CD4-positive, alpha-beta T cell (primary cell): ENCODE measurements at regions of chr19 and their contacts with region 1.

Region 1: GRCh38 chr19:19531951-19532805 is 3.5 kb downstream of the YJEFN3 start:
- DNase-seq: peak; percentile 69 to 94 (median 86)
- ATAC-seq: peak; percentile 84
- H3K4me3 ChIP-seq: no peak overlapping the region
- H3K4me3 Mint-ChIP-seq: peak overlapping the region; percentile 43
- H3K27ac ChIP-seq: no peak overlapping the region
- H3K27ac Mint-ChIP-seq: peak overlapping the region; percentile 47
- H3K4me1 ChIP-seq: peaks cover 11% of the 10 kb centered on the region
- H3K4me1 Mint-ChIP-seq: peaks cover 22% of the 10 kb centered on the region
- H3K27me3 ChIP-seq: no peaks in the 10 kb centered on the region
- H3K27me3 Mint-ChIP-seq: no peaks in the 10 kb centered on the region
- CTCF ChIP-seq: peak; percentile 88

Region 2: DNA sequence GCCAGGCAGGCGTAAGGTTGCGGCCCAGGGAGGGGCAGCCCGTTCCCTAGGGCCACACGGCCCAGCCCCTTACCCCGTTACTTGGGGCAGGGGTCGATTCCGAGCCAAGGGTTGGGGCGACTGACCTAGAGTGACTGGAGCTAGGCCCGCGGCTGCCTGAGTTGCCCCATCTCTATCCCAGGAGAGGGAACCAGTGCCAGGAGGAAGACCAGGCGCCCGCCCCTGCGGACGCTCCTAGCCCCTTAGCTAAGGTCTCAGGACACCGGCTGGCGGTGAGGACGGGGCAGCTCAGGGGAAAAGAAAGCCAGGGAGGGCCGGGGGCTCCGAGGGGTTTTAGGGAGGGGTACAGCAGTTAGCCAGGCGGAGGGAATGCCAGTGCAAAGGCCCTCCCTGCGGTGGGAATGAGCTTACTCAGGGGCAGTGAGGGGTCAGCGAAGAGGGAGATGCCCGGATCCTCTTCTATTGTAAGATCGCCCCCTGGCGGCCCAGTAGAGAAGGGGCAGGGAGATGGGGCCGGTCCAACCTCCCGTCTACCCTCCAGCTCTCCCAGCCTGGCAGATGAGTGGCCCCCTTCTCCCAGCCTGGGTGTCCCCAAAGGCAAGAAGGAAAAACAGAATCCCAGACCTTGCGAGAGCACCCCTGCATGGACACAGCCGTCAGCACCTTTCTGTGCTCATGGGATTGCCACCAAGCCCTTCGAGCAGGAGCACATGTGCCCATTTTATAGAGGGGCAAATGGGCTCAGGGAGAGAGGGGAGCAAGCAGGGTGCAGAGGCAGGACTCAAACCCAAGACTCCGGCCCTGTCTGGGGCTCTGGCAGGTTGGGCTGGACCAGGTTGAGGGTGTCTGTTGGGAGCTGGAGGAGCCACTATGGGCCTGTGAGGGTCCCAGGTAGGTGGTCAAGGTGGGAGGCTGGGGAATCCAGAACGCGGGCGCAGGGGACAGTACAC is 22.2 kb after region 1 on chr19:
- CTCF ChIA-PET with region 1: interaction called, 15 read pairs
- POLR2A ChIA-PET with region 1: interaction called, 10 read pairs
- intact Hi-C with region 1: no loop called
- DNase-seq: peak in 13 of 14 experiments; percentile 38 to 76 (median 49)
- ATAC-seq: peak; percentile 42
- H3K4me3 ChIP-seq: no peak overlapping the region
- H3K4me3 Mint-ChIP-seq: no peak overlapping the region
- H3K27ac ChIP-seq: no peak overlapping the region
- H3K27ac Mint-ChIP-seq: no peak overlapping the region
- H3K4me1 ChIP-seq: peaks cover 8% of the 10 kb centered on the region
- H3K4me1 Mint-ChIP-seq: peaks cover 13% of the 10 kb centered on the region
- H3K27me3 ChIP-seq: no peaks in the 10 kb centered on the region
- H3K27me3 Mint-ChIP-seq: no peaks in the 10 kb centered on the region
- CTCF ChIP-seq: peak; percentile 81

Region 3: GRCh38 chr19:19591133-19591825 is 59.1 kb after region 1 on chr19:
- CTCF ChIA-PET with region 1: interaction called, 12 read pairs
- POLR2A ChIA-PET with region 1: no interaction called
- intact Hi-C with region 1: loop called in 1 of 2 experiments (anchors 5 kb)
- DNase-seq: peak in 13 of 14 experiments; percentile 27 to 92 (median 49)
- ATAC-seq: peak; percentile 91
- H3K4me3 ChIP-seq: no peak overlapping the region
- H3K4me3 Mint-ChIP-seq: peak overlapping the region; percentile 60
- H3K27ac ChIP-seq: peak overlapping the region; percentile 55 to 79
- H3K27ac Mint-ChIP-seq: peak overlapping the region; percentile 92
- H3K4me1 ChIP-seq: peaks cover 78% of the 10 kb centered on the region
- H3K4me1 Mint-ChIP-seq: peaks cover 47% of the 10 kb centered on the region
- H3K27me3 ChIP-seq: no peaks in the 10 kb centered on the region
- H3K27me3 Mint-ChIP-seq: no peaks in the 10 kb centered on the region
- CTCF ChIP-seq: no peak

Region 4: GRCh38 chr19:19627621-19628500 is 95.7 kb after region 1 on chr19 and contains the start of gene LPAR2:
- CTCF ChIA-PET with region 1: interaction called, 10 read pairs
- POLR2A ChIA-PET with region 1: interaction called, 7 read pairs
- intact Hi-C with region 1: loop called in 1 of 2 experiments (anchors 5 kb)
- DNase-seq: peak; percentile 65 to 91 (median 80)
- ATAC-seq: peak; percentile 83
- H3K4me3 ChIP-seq: peak within 1 kb of the TSS; percentile 84
- H3K4me3 Mint-ChIP-seq: peak within 1 kb of the TSS; percentile 99
- H3K27ac ChIP-seq: peak within 1 kb of the TSS; percentile 52 to 84
- H3K27ac Mint-ChIP-seq: peak within 1 kb of the TSS; percentile 91
- H3K4me1 ChIP-seq: peaks cover 37% of the 10 kb centered on the region
- H3K4me1 Mint-ChIP-seq: peaks cover 28% of the 10 kb centered on the region
- H3K27me3 ChIP-seq: no peaks in the 10 kb centered on the region
- H3K27me3 Mint-ChIP-seq: no peaks in the 10 kb centered on the region
- CTCF ChIP-seq: no peak
- total RNA-seq, gene LPAR2: 85.9 to 93.7 TPM

Region 5: GRCh38 chr19:19745496-19746285 is 213.5 kb after region 1 on chr19:
- CTCF ChIA-PET with region 1: no interaction called
- POLR2A ChIA-PET with region 1: no interaction called
- intact Hi-C with region 1: loop called in 1 of 2 experiments (anchors 5 kb)
- DNase-seq: peak in 2 of 14 experiments; percentile 20 to 32
- ATAC-seq: peak; percentile 65
- H3K4me3 ChIP-seq: no peak overlapping the region
- H3K4me3 Mint-ChIP-seq: no peak overlapping the region
- H3K27ac ChIP-seq: no peak overlapping the region
- H3K27ac Mint-ChIP-seq: no peak overlapping the region
- H3K4me1 ChIP-seq: no peaks in the 10 kb centered on the region
- H3K4me1 Mint-ChIP-seq: no peaks in the 10 kb centered on the region
- H3K27me3 ChIP-seq: no peaks in the 10 kb centered on the region
- H3K27me3 Mint-ChIP-seq: no peaks in the 10 kb centered on the region
- CTCF ChIP-seq: no peak

Region 6: GRCh38 chr19:19956434-19957075 is 424.4 kb after region 1 on chr19:
- CTCF ChIA-PET with region 1: interaction called, 11 read pairs
- POLR2A ChIA-PET with region 1: interaction called, 5 read pairs
- intact Hi-C with region 1: loop called (anchors 1 kb)
- DNase-seq: no peak
- ATAC-seq: no peak
- H3K4me3 ChIP-seq: no peak overlapping the region
- H3K4me3 Mint-ChIP-seq: no peak overlapping the region
- H3K27ac ChIP-seq: no peak overlapping the region
- H3K27ac Mint-ChIP-seq: no peak overlapping the region
- H3K4me1 ChIP-seq: peaks cover 6% of the 10 kb centered on the region
- H3K4me1 Mint-ChIP-seq: no peaks in the 10 kb centered on the region
- H3K27me3 ChIP-seq: no peaks in the 10 kb centered on the region
- H3K27me3 Mint-ChIP-seq: no peaks in the 10 kb centered on the region
- CTCF ChIP-seq: no peak